Activated T-helper 1 cell treated with anti-CD3 and anti-CD28 coated beads, Interleukin-12 subunit alpha, Interleukin-12 subunit beta, Interleukin-2, Interleukin-4 antibody, amounts not matched to agents 30 ng/mL and 10 ng/mL and 1 ng/mL, durations not matched to agents 14 hours and 24 hours and 36 hours (primary cell): ENCODE measurements at regions of chr5 and their contacts with region 1.

Region 1: GRCh38 chr5:175657593-175658271 is at the start of gene HRH2:
- DNase-seq: peak; percentile 62
- H3K4me3 Mint-ChIP-seq: peak within 1 kb of the TSS; percentile 98
- H3K27ac Mint-ChIP-seq: peak within 1 kb of the TSS; percentile 96
- H3K4me1 Mint-ChIP-seq: peaks cover 87% of the 10 kb centered on the region
- H3K27me3 Mint-ChIP-seq: peaks cover 2% of the 10 kb centered on the region
- total RNA-seq, gene HRH2: 94.7 and 96.9 TPM in 2 replicates

Region 2: DNA sequence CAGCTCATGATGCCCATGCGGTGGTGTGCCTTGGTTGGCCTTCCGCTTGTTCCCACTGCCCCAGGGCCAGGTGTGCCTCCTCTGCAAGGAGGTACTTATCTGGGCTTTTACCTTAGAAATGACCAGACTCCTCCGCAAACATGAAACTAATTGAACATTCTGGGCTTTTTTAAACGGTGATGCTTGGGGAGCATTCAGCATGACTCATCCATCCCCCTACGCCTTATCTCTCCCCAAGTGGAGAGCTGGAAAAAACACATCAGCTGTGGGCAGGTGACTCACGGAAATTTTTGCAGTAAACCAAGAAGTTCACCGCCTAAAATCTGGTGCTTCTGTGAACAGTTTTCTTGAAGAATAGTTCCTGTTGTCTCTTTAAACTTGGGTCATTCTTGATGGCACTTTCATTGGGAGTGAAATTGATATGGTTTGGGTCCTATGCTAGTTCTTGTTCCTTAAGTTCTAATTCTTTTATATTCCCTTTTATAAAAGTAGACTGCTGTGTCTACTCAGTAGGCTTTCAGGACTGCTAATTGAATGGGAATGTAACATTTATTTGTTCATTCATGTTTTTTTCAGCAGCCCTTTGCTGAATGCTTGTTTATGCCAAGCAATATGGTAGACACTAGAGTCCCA is 139.8 kb before region 1 on chr5:
- intact Hi-C with region 1: loop called (anchors 1 kb)
- DNase-seq: peak; percentile 73
- H3K4me3 Mint-ChIP-seq: peak overlapping the region; percentile 74
- H3K27ac Mint-ChIP-seq: peak overlapping the region; percentile 99
- H3K4me1 Mint-ChIP-seq: peaks cover 86% of the 10 kb centered on the region
- H3K27me3 Mint-ChIP-seq: no peaks in the 10 kb centered on the region

Region 3: GRCh38 chr5:175609526-175609925 is 48.2 kb before region 1 on chr5:
- intact Hi-C with region 1: loop called (anchors 1 kb)
- DNase-seq: no peak
- H3K4me3 Mint-ChIP-seq: no peak overlapping the region
- H3K27ac Mint-ChIP-seq: no peak overlapping the region
- H3K4me1 Mint-ChIP-seq: peaks cover 8% of the 10 kb centered on the region
- H3K27me3 Mint-ChIP-seq: peaks cover 20% of the 10 kb centered on the region

Region 4: GRCh38 chr5:175696139-175696854 is 38.6 kb after region 1 on chr5:
- intact Hi-C with region 1: loop called (anchors 1 kb)
- DNase-seq: peak; percentile 63
- H3K4me3 Mint-ChIP-seq: peak overlapping the region; percentile 33
- H3K27ac Mint-ChIP-seq: peak overlapping the region; percentile 78
- H3K4me1 Mint-ChIP-seq: peaks cover 39% of the 10 kb centered on the region
- H3K27me3 Mint-ChIP-seq: no peaks in the 10 kb centered on the region

Region 5: GRCh38 chr5:175796536-175797499 is 139.1 kb after region 1 on chr5:
- intact Hi-C with region 1: loop called (anchors 2 kb)
- DNase-seq: peak; percentile 78
- H3K4me3 Mint-ChIP-seq: no peak overlapping the region
- H3K27ac Mint-ChIP-seq: no peak overlapping the region
- H3K4me1 Mint-ChIP-seq: no peaks in the 10 kb centered on the region
- H3K27me3 Mint-ChIP-seq: peaks cover 31% of the 10 kb centered on the region

Region 6: DNA sequence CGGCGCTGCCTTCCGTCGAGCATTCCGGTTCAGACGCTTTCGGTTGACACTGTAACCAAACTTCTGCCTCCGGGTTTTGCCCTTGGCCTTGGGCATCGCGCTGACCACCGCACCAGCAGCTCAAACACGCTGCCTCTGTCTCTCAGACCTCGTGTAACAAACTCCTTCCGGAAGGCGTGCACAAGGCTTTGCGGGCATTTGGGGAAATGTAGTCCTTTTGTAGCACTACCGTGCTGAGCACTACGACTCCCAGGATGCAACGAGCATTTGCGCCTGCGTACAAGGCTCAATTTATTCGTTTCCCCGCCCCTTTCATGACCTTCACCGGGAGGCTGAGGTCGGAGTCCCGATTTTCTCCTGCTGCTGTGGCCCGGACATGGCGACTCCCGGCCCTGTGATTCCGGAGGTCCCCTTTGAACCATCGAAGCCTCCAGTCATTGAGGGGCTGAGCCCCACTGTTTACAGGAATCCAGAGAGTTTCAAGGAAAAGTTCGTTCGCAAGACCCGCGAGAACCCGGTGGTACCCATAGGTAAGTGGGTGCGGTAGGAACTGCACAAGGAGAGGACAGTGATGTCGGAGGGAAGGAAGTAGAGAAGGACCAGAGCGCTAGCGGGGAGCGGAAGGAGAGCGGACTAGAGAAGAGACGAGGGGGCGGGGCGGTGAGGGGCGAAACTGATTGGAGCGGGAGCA is 730.9 kb after region 1 on chr5 and contains the starts of genes HIGD2A and NOP16:
- intact Hi-C with region 1: loop called (anchors 2 kb)
- DNase-seq: peak; percentile 96
- H3K4me3 Mint-ChIP-seq: peak within 1 kb of the TSS; percentile 100
- H3K27ac Mint-ChIP-seq: peak within 1 kb of the TSS; percentile 98
- H3K4me1 Mint-ChIP-seq: peaks cover 44% of the 10 kb centered on the region
- H3K27me3 Mint-ChIP-seq: no peaks in the 10 kb centered on the region
- total RNA-seq, gene HIGD2A: 93.2 and 93.5 TPM in 2 replicates
- total RNA-seq, gene NOP16: 111 TPM in 2 replicates